ENCODE measurements at regions of chr11 and their contacts with region 1.

Region 1: GRCh38 chr11:104918113-104918824 is 20.0 kb upstream of the CASP12 start:
- DNase-seq: peak in 4 of 9 donors; percentile 14 to 46 (median 32)
- ATAC-seq: peak; percentile 82
- H3K4me3 ChIP-seq: peak overlapping the region; percentile 60
- H3K4me3 Mint-ChIP-seq: peak overlapping the region; percentile 76 to 99 (median 91)
- H3K27ac ChIP-seq: peak overlapping the region; percentile 65
- H3K27ac Mint-ChIP-seq: peak overlapping the region; percentile 58 to 97 (median 92)
- H3K4me1 ChIP-seq: peaks cover 12 to 34% of the 10 kb centered on the region in 2 donors
- H3K4me1 Mint-ChIP-seq: peaks cover 30 to 72% (median 55%) of the 10 kb centered on the region in 7 donors
- H3K27me3 ChIP-seq: no peaks in the 10 kb centered on the region
- H3K27me3 Mint-ChIP-seq: peaks cover 0 to 3% (median 0%) of the 10 kb centered on the region in 5 donors

Region 2: GRCh38 chr11:104876861-104877431 is 41.3 kb before region 1 on chr11:
- CTCF ChIA-PET with region 1: no interaction called
- POLR2A ChIA-PET with region 1: no interaction called
- intact Hi-C with region 1: loop called (anchors 1 to 2 kb)
- DNase-seq: peak in 6 of 9 donors; percentile 6 to 31 (median 21)
- ATAC-seq: peak; percentile 85
- H3K4me3 ChIP-seq: peak overlapping the region; percentile 40
- H3K4me3 Mint-ChIP-seq: peak overlapping the region; percentile 45 to 82 (median 75)
- H3K27ac ChIP-seq: peak overlapping the region; percentile 64
- H3K27ac Mint-ChIP-seq: peak overlapping the region; percentile 62 to 97 (median 85)
- H3K4me1 ChIP-seq: peaks cover 20 to 29% of the 10 kb centered on the region in 2 donors
- H3K4me1 Mint-ChIP-seq: peaks cover 25 to 52% (median 43%) of the 10 kb centered on the region in 7 donors
- H3K27me3 ChIP-seq: no peaks in the 10 kb centered on the region
- H3K27me3 Mint-ChIP-seq: no peaks in the 10 kb centered on the region

Region 3: DNA sequence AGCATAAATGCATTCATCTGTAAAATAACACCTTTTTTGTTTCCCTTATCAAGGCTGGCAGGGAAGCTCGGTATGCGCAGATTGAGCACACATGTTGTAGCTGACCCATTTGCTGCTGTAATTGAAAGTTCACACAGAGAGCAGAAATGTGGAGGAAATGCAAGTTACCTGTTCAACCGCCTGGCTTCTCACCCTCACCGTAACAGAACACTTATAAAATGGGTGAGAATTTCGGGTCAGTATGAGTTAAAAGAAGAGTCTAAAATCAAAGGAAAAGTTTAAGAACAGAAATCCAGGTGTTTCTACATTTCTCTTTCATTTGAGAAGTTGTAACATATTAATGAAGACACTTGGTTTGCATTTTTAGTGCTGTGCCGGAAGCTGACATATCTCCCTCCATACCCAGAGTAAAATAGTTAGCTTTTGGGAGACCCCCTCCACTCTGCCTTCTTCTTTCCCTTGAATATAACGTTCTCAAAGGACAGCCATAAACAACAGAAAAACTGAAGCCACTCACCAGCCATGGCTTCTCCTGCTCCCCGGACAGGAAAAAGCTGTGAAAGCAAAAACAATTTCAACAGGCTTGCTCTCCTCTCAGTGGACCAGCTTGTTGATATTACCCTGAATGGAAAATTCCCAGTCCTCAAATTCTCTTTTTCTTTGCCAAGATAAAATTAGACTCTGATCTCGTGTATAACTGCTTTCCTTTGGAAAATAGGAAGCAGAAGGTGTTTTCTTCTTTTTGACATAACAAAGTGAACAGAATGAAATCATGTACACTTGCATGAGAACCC is 20.2 kb before region 1 on chr11 and contains the start of gene CASP12:
- CTCF ChIA-PET with region 1: no interaction called
- POLR2A ChIA-PET with region 1: no interaction called
- intact Hi-C with region 1: loop called in 1 of 2 experiments (anchors 1 kb)
- DNase-seq: peak in 1 of 9 donors; percentile 12
- ATAC-seq: peak; percentile 51
- H3K4me3 ChIP-seq: peak within 1 kb of the TSS; percentile 34
- H3K4me3 Mint-ChIP-seq: peak within 1 kb of the TSS in 8 of 10 donors; percentile 42 to 73 (median 54)
- H3K27ac ChIP-seq: no peak within 1 kb of the TSS
- H3K27ac Mint-ChIP-seq: peak within 1 kb of the TSS in 8 of 9 donors; percentile 0 to 73 (median 54)
- H3K4me1 ChIP-seq: peaks cover 3 to 23% of the 10 kb centered on the region in 2 donors
- H3K4me1 Mint-ChIP-seq: peaks cover 10 to 30% (median 26%) of the 10 kb centered on the region in 7 donors
- H3K27me3 ChIP-seq: no peaks in the 10 kb centered on the region
- H3K27me3 Mint-ChIP-seq: peaks cover 0 to 2% (median 0%) of the 10 kb centered on the region in 5 donors
- total RNA-seq, gene CASP12: not detected

Region 4: DNA sequence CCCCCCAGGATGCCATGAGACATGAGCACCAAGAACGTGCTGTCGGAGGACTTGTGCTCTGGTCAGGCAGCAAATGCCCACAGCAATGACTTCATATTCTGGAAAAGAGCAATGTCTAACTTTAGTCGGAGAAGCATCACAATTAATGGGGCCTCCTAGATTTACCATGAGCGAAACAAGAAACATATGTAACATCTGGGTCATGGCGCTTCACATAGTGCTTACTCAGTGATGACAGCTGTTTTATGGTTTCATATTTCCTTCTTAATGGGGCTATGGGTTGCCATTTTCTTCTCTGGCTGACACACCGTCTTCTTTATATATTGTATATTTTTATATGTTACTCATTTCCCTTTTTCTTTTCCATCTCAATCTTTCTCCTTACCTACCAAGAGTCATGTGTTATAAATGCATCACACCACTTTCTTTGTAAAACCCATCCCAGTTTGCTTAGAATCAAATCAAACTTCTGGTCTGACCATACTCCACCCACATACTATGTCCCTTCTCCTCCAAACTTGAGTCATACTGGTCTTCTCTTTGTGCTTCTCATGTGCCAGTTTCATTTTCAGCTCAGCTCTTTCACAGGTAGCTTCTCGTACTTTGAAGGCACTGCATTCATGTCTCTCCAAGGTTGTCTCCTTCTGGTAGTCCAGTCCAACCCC is 10.6 kb before region 1 on chr11:
- CTCF ChIA-PET with region 1: no interaction called
- POLR2A ChIA-PET with region 1: interaction called, 4 read pairs
- intact Hi-C with region 1: loop called in 1 of 2 experiments (anchors 1 kb)
- DNase-seq: no peak
- ATAC-seq: no peak
- H3K4me3 ChIP-seq: no peak overlapping the region
- H3K4me3 Mint-ChIP-seq: peak overlapping the region in 1 of 10 donors; percentile 27
- H3K27ac ChIP-seq: no peak overlapping the region
- H3K27ac Mint-ChIP-seq: peak overlapping the region in 1 of 9 donors; percentile 35
- H3K4me1 ChIP-seq: peaks cover 0 to 3% of the 10 kb centered on the region in 2 donors
- H3K4me1 Mint-ChIP-seq: peaks cover 6 to 21% (median 12%) of the 10 kb centered on the region in 7 donors
- H3K27me3 ChIP-seq: no peaks in the 10 kb centered on the region
- H3K27me3 Mint-ChIP-seq: no peaks in the 10 kb centered on the region

Region 5: GRCh38 chr11:104934594-104934993 is 16.3 kb after region 1 on chr11:
- CTCF ChIA-PET with region 1: no interaction called
- POLR2A ChIA-PET with region 1: interaction called, 3 read pairs
- intact Hi-C with region 1: loop called in 1 of 2 experiments (anchors 1 kb)
- DNase-seq: peak in 6 of 9 donors; percentile 8 to 37 (median 32)
- ATAC-seq: peak; percentile 65
- H3K4me3 ChIP-seq: peak overlapping the region; percentile 4
- H3K4me3 Mint-ChIP-seq: peak overlapping the region; percentile 55 to 85 (median 74)
- H3K27ac ChIP-seq: no peak overlapping the region
- H3K27ac Mint-ChIP-seq: peak overlapping the region in 3 of 9 donors; percentile 10 to 27 (median 19)
- H3K4me1 ChIP-seq: peaks cover 13 to 14% of the 10 kb centered on the region in 2 donors
- H3K4me1 Mint-ChIP-seq: peaks cover 21 to 44% (median 34%) of the 10 kb centered on the region in 7 donors
- H3K27me3 ChIP-seq: no peaks in the 10 kb centered on the region
- H3K27me3 Mint-ChIP-seq: peaks cover 0 to 28% (median 0%) of the 10 kb centered on the region in 5 donors

Region 6: DNA sequence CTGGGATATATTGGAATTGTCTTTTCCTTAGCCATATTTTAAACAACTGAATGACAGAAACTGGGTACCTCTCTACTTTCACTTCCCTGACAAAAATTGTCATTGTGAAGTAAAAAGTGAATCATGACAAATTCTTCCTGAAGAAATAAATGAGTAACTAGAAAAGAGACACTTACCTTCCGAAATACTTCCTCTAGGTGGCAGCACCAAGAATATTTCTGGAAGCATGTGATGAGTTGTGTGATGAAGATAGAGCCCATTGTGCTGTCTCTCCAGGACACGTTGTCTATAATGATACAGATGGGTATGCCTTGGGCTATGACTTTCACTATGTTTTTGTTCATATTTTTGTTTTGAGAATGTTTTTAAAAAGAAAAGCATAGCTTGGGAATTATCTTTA is 28.6 kb after region 1 on chr11:
- CTCF ChIA-PET with region 1: no interaction called
- POLR2A ChIA-PET with region 1: no interaction called
- intact Hi-C with region 1: loop called in 1 of 2 experiments (anchors 2 kb)
- DNase-seq: peak in 7 of 9 donors; percentile 11 to 59 (median 50)
- ATAC-seq: peak; percentile 86
- H3K4me3 ChIP-seq: no peak overlapping the region
- H3K4me3 Mint-ChIP-seq: no peak overlapping the region
- H3K27ac ChIP-seq: no peak overlapping the region
- H3K27ac Mint-ChIP-seq: peak overlapping the region in 6 of 9 donors; percentile 3 to 55 (median 39)
- H3K4me1 ChIP-seq: no peaks in the 10 kb centered on the region
- H3K4me1 Mint-ChIP-seq: peaks cover 5 to 25% (median 14%) of the 10 kb centered on the region in 7 donors
- H3K27me3 ChIP-seq: no peaks in the 10 kb centered on the region
- H3K27me3 Mint-ChIP-seq: no peaks in the 10 kb centered on the region

Region 7: GRCh38 chr11:104968355-104968855 is 50.1 kb after region 1 on chr11 and contains the start of gene CASP4:
- CTCF ChIA-PET with region 1: no interaction called
- POLR2A ChIA-PET with region 1: interaction called, 5 read pairs
- intact Hi-C with region 1: loop called (anchors 1 to 5 kb)
- DNase-seq: peak in 7 of 9 donors; percentile 18 to 57 (median 48)
- ATAC-seq: peak; percentile 82
- H3K4me3 ChIP-seq: peak within 1 kb of the TSS; percentile 67
- H3K4me3 Mint-ChIP-seq: peak within 1 kb of the TSS; percentile 90 to 99 (median 96)
- H3K27ac ChIP-seq: peak within 1 kb of the TSS; percentile 89
- H3K27ac Mint-ChIP-seq: peak within 1 kb of the TSS; percentile 94 to 100 (median 97)
- H3K4me1 ChIP-seq: peaks cover 16 to 36% of the 10 kb centered on the region in 2 donors
- H3K4me1 Mint-ChIP-seq: peaks cover 35 to 47% (median 43%) of the 10 kb centered on the region in 7 donors
- H3K27me3 ChIP-seq: no peaks in the 10 kb centered on the region
- H3K27me3 Mint-ChIP-seq: no peaks in the 10 kb centered on the region
- total RNA-seq, gene CASP4: 60.7 to 94.7 (median 76.9) TPM

Region 8: DNA sequence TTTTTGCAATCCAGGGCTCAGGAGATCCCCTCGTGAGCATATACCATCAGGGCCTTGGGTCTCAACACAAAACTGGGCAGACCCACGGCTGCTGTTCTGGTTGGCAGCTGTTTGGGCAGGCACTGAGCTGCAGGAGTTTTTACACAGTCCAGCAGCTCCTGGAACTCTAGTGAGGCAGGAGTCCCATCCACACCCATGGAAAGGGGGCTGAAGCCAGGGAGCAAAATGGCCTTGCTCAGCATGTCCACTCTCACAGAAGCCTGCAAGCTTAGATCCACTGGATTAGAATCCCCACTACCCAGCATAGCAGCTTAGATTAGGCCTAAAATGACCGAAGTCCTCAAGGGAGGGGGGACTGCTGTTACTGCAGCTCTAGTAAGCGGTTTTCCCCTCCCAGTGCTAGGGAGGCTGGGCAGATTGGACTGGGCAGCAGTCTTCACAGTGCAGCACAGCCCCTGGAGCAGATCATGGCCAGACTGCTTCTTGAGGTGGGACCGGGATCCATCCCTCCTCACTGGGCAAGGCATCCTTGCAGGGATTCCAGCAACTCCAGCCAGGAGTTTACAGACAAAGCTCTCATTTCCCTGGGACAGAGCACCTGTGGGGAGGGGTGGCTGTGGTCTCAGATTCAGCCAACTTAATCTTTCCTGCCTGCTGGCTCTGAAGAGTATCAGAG is 163.3 kb after region 1 on chr11:
- CTCF ChIA-PET with region 1: no interaction called
- POLR2A ChIA-PET with region 1: no interaction called
- intact Hi-C with region 1: no loop called
- DNase-seq: no peak
- ATAC-seq: no peak
- H3K4me3 ChIP-seq: no peak overlapping the region
- H3K4me3 Mint-ChIP-seq: no peak overlapping the region
- H3K27ac ChIP-seq: no peak overlapping the region
- H3K27ac Mint-ChIP-seq: no peak overlapping the region
- H3K4me1 ChIP-seq: no peaks in the 10 kb centered on the region
- H3K4me1 Mint-ChIP-seq: peaks cover 5 to 24% (median 12%) of the 10 kb centered on the region in 7 donors
- H3K27me3 ChIP-seq: no peaks in the 10 kb centered on the region
- H3K27me3 Mint-ChIP-seq: peaks cover 10 to 31% (median 23%) of the 10 kb centered on the region in 5 donors